Activated CD8-positive, alpha-beta T cell treated with anti-CD3 and anti-CD28 coated beads, Interleukin-2, amount 10 ng/mL, durations not matched to agents 7 days and 5 days (primary cell): ENCODE measurements at regions of chr11 and their contacts with region 1.

Region 1: GRCh38 chr11:6812390-6813005 is 13.0 kb upstream of the OR6A2 start:
- DNase-seq: peak; percentile 47
- ATAC-seq: peak; percentile 74
- H3K4me3 Mint-ChIP-seq: no peak overlapping the region
- H3K27ac Mint-ChIP-seq: no peak overlapping the region
- H3K4me1 Mint-ChIP-seq: no peaks in the 10 kb centered on the region
- H3K27me3 Mint-ChIP-seq: peaks cover 22% of the 10 kb centered on the region

Region 2: GRCh38 chr11:6746086-6746618 is 66.3 kb before region 1 on chr11:
- CTCF ChIA-PET with region 1: interaction called, 11 read pairs
- POLR2A ChIA-PET with region 1: no interaction called
- DNase-seq: peak; percentile 65
- ATAC-seq: peak; percentile 85
- H3K4me3 Mint-ChIP-seq: no peak overlapping the region
- H3K27ac Mint-ChIP-seq: no peak overlapping the region
- H3K4me1 Mint-ChIP-seq: peaks cover 41% of the 10 kb centered on the region
- H3K27me3 Mint-ChIP-seq: no peaks in the 10 kb centered on the region

Region 3: GRCh38 chr11:6824136-6824823 is 11.8 kb after region 1 on chr11:
- CTCF ChIA-PET with region 1: interaction called, 12 read pairs
- POLR2A ChIA-PET with region 1: no interaction called
- DNase-seq: no peak
- ATAC-seq: no peak
- H3K4me3 Mint-ChIP-seq: no peak overlapping the region
- H3K27ac Mint-ChIP-seq: no peak overlapping the region
- H3K4me1 Mint-ChIP-seq: no peaks in the 10 kb centered on the region
- H3K27me3 Mint-ChIP-seq: peaks cover 9% of the 10 kb centered on the region